ENCODE measurements at regions of chr16 and their contacts with region 1.

Region 1: DNA sequence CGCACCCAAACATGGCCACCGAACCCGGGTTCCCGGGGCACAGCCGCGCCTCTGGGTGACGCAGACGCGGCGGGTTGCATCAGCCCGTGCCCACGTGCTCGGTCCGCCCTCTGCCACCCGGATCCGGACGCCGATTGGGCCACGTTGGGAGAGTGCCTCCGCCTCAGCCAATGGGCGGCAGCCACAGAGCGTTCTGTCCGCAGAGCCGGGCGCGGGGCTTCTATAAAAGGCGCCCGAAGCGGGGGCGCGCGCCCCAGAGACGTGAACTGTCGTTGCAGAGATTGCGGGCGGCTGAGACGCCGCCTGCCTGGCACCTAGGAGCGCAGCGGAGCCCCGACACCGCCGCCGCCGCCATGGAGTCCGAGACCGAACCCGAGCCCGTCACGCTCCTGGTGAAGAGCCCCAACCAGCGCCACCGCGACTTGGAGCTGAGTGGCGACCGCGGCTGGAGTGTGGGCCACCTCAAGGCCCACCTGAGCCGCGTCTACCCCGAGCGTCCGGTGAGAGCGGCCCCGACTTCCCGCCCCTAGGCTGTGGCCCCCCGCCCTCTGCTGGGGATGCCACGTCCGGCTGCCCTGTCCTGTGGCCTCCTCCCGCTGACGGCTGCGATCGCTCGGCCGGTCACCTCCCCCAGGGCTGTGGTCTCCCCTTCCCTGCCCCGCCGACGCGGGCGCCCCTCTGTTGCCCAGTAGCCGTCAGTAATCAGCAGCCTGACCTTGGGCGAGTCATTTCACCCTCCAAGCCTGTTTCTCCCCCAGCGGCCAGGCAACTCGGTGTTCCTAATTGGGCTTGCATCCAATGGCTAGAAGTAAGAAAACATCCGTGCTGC is at the start of gene HERPUD1:
- DNase-seq: peak; percentile 92
- ATAC-seq: peak; percentile 95
- H3K4me3 ChIP-seq: peak within 1 kb of the TSS; percentile 97 to 98
- H3K27ac ChIP-seq: peak within 1 kb of the TSS; percentile 61
- H3K4me1 ChIP-seq: peaks cover 7 to 20% of the 10 kb centered on the region in 2 experiments; a peak in 3 of 4 replicates
- H3K27me3 ChIP-seq: no peaks in the 10 kb centered on the region
- CTCF ChIP-seq: no peak
- POLR2A ChIP-seq: peak; percentile 94
- RAD21 ChIP-seq: no peak
- total RNA-seq, gene HERPUD1: 113 TPM

Region 2: DNA sequence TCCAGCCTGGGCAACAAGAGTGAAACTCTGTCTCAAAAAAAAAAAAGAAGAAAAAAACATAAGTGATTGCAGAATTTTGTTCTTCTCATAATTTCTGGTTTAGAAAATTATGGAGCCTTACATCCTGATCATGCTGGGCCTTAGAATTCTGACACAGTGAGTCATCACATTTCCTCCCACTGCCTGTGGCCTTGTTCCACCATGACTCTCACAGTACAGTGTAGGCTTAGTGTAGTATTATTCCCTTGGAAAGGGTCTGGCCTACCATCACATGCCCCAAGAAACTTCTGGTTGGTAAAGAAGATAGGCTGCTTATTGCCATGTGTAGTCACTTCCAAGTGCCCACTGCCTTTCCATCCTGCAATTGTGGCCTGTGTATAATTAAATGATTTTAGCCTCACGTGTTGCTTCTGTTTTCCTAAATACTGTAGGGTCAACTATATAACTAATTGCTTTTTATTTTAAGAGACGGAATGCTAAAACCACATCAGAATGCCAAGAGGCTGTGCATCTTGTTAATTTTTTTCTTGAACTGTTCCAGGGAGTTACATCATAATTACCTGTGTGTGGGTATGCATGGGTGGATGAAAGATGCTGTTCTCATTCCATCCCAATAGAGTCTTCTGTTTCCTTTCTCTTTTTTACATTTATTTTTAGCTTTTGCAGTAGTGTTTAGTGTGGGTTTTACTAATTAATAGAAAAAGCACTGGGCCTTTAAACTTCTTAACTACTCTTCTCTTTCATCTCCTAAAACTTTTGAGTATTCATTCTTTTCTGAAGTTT is 454.8 kb before region 1 on chr16:
- CTCF ChIA-PET with region 1: no interaction called
- POLR2A ChIA-PET with region 1: no interaction called
- RAD21 ChIA-PET with region 1: no interaction called
- intact Hi-C with region 1: no loop called
- DNase-seq: peak; percentile 46
- ATAC-seq: peak; percentile 86
- H3K4me3 ChIP-seq: no peak overlapping the region
- H3K27ac ChIP-seq: peak overlapping the region; percentile 0; the same call in 1 of the 2 replicates
- H3K4me1 ChIP-seq: peaks cover 2 to 23% of the 10 kb centered on the region in 2 experiments; a peak in 2 of 4 replicates
- H3K27me3 ChIP-seq: no peaks in the 10 kb centered on the region
- CTCF ChIP-seq: no peak
- POLR2A ChIP-seq: no peak
- RAD21 ChIP-seq: no peak

Region 3: GRCh38 chr16:56789360-56789759 is 142.7 kb before region 1 on chr16:
- CTCF ChIA-PET with region 1: no interaction called
- POLR2A ChIA-PET with region 1: no interaction called
- RAD21 ChIA-PET with region 1: no interaction called
- intact Hi-C with region 1: no loop called
- DNase-seq: peak; percentile 55
- ATAC-seq: peak; percentile 88
- H3K4me3 ChIP-seq: no peak overlapping the region
- H3K27ac ChIP-seq: no peak overlapping the region
- H3K4me1 ChIP-seq: no peaks in the 10 kb centered on the region
- H3K27me3 ChIP-seq: no peaks in the 10 kb centered on the region
- CTCF ChIP-seq: peak; percentile 59 to 65 (median 62); a peak in 5 of 6 replicates
- POLR2A ChIP-seq: no peak
- RAD21 ChIP-seq: peak; percentile 82

Region 4: GRCh38 chr16:56911771-56912571 is 20.1 kb before region 1 on chr16:
- CTCF ChIA-PET with region 1: no interaction called
- POLR2A ChIA-PET with region 1: interaction called, 11 read pairs
- RAD21 ChIA-PET with region 1: no interaction called
- intact Hi-C with region 1: no loop called
- DNase-seq: no peak
- ATAC-seq: no peak
- H3K4me3 ChIP-seq: no peak overlapping the region
- H3K27ac ChIP-seq: no peak overlapping the region
- H3K4me1 ChIP-seq: no peaks in the 10 kb centered on the region
- H3K27me3 ChIP-seq: no peaks in the 10 kb centered on the region
- CTCF ChIP-seq: no peak
- POLR2A ChIP-seq: no peak
- RAD21 ChIP-seq: no peak

Region 5: GRCh38 chr16:56919099-56919800 is 12.9 kb before region 1 on chr16:
- CTCF ChIA-PET with region 1: interaction called, 4 read pairs
- POLR2A ChIA-PET with region 1: interaction called, 14 read pairs
- RAD21 ChIA-PET with region 1: no interaction called
- intact Hi-C with region 1: no loop called
- DNase-seq: no peak
- ATAC-seq: no peak
- H3K4me3 ChIP-seq: no peak overlapping the region
- H3K27ac ChIP-seq: no peak overlapping the region
- H3K4me1 ChIP-seq: no peaks in the 10 kb centered on the region
- H3K27me3 ChIP-seq: 0 out of 2 replicates have a peak, but pooled peaks cover 7% of the 10 kb centered on the region
- CTCF ChIP-seq: no peak
- POLR2A ChIP-seq: no peak
- RAD21 ChIP-seq: no peak

Region 6: DNA sequence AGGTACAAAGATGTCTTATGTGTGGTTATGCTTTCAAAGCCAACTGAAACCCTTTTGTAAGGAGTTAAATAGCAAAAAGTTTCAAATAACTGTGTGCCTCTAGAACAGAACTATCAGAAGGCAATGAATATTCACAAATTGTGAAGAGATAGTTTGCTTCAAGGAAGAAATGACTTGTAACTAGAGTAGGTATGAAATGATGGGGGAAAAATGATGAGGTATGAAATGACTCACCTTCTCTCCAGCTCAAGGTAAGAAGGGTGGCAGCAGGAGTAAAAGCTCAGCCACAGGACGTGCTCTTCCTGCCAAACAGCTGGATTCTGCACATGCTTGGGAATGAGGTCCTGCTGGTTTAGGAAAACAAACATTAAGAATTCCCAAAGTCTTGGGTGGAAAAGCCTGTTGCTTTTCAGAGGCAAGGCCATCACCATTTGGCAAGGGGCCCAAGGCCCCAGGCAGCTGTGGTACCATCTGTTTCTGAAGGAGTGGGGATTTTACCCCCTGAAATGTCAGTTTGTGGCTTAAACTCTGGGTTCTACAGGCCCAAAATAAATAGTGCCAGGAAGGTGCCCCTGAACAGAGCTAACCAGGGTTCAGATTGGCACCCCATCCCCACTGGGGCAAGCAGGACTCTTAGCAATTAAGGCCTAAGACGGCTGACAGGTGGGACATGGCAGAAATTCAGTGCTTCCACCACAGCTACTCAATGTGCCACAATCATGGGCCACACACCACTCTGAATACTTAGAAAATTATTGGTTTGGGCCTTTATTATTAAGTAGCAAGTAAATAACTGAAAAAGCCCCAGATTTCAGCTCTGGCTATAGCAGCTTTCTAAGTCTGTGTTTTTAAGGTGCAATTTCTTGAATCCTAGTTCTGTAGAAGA is 13.1 kb after region 1 on chr16:
- CTCF ChIA-PET with region 1: no interaction called
- POLR2A ChIA-PET with region 1: interaction called, 25 read pairs
- RAD21 ChIA-PET with region 1: no interaction called
- intact Hi-C with region 1: no loop called
- DNase-seq: no peak
- ATAC-seq: 0 out of 2 replicates have a peak, but pooled peaks have one; percentile 19
- H3K4me3 ChIP-seq: no peak overlapping the region
- H3K27ac ChIP-seq: no peak overlapping the region
- H3K4me1 ChIP-seq: peaks cover 0 to 3% of the 10 kb centered on the region in 2 experiments; a peak in 1 of 4 replicates
- H3K27me3 ChIP-seq: no peaks in the 10 kb centered on the region
- CTCF ChIP-seq: no peak
- POLR2A ChIP-seq: no peak
- RAD21 ChIP-seq: no peak